ENCODE measurements at regions of chr10 and their contacts with region 1.

Region 1: GRCh38 chr10:98467506-98468346 is 21.0 kb upstream of the HPS1 start:
- DNase-seq: peak; percentile 79
- H3K4me3 ChIP-seq: peak overlapping the region; percentile 31 to 70 (median 44)
- H3K27ac ChIP-seq: peak overlapping the region in 3 of 4 donors; percentile 31 to 46 (median 42)
- H3K4me1 ChIP-seq: peaks cover 0 to 7% (median 3%) of the 10 kb centered on the region in 4 donors
- H3K27me3 ChIP-seq: no peaks in the 10 kb centered on the region
- CTCF ChIP-seq: peak; percentile 81 to 90 (median 85)
- EP300 ChIP-seq: no peak
- POLR2A ChIP-seq: no peak

Region 2: GRCh38 chr10:98664331-98665042 is 196.8 kb after region 1 on chr10:
- in situ Hi-C with region 1: loop called in 2 of 4 experiments (anchors 10 to 25 kb)
- intact Hi-C with region 1: no loop called
- DNase-seq: peak; percentile 10
- H3K4me3 ChIP-seq: no peak overlapping the region
- H3K27ac ChIP-seq: no peak overlapping the region
- H3K4me1 ChIP-seq: no peaks in the 10 kb centered on the region
- H3K27me3 ChIP-seq: no peaks in the 10 kb centered on the region
- CTCF ChIP-seq: peak; percentile 44 to 62 (median 58)
- EP300 ChIP-seq: no peak
- POLR2A ChIP-seq: no peak

Region 3: DNA sequence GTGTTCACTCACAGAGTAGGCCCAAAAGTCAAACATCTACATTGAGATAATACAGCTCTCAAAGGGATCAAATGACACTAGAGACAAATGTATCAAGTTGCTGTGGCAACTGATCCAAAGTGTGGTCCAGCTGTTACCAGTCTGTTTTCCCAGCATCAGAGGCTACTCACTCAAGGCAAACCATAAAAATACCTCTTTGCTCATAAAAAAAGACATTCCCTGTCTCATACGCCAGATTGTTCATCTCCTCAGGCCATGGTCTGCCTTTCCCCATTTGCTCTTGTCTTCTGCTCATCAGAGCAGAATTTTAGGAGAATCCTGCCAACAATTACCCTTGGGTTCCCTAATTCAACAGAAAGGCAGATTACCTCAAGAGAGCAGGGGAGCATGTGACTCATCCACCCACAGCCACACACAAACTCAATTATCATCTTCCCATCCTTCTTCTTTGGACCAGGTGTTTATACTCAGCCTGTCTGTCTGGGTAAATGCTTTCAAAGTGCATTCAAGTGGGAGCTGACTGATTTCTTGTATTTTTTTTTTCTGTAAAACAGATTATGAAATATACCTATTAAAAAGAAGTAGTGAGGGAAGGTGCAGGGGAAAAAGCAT is 205.6 kb after region 1 on chr10:
- in situ Hi-C with region 1: loop called in 3 of 4 experiments (anchors 10 to 25 kb)
- intact Hi-C with region 1: no loop called
- DNase-seq: no peak
- H3K4me3 ChIP-seq: no peak overlapping the region
- H3K27ac ChIP-seq: no peak overlapping the region
- H3K4me1 ChIP-seq: no peaks in the 10 kb centered on the region
- H3K27me3 ChIP-seq: no peaks in the 10 kb centered on the region
- CTCF ChIP-seq: no peak
- EP300 ChIP-seq: no peak
- POLR2A ChIP-seq: no peak

Region 4: DNA sequence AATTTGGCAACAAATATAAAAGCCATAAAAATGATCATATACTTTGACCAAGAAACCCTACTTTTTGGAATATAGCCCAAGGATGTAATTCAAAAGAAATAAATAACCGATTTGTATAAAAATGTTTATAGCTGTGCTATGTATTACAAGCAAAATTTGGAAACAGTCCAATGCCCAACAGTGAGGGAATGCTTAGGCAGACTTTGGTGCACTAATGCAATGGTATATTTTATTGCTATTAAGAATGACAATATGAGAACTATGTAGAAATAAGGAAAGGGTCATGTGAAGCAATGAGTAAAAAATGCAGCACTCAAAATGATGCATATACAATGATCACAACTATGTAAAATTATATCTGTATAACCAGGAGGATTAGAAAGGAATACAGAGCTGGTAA is 252.8 kb after region 1 on chr10:
- in situ Hi-C with region 1: no loop called
- intact Hi-C with region 1: no loop called
- DNase-seq: no peak
- H3K4me3 ChIP-seq: no peak overlapping the region
- H3K27ac ChIP-seq: no peak overlapping the region
- H3K4me1 ChIP-seq: no peaks in the 10 kb centered on the region
- H3K27me3 ChIP-seq: no peaks in the 10 kb centered on the region
- CTCF ChIP-seq: no peak
- EP300 ChIP-seq: no peak
- POLR2A ChIP-seq: no peak

Region 5: DNA sequence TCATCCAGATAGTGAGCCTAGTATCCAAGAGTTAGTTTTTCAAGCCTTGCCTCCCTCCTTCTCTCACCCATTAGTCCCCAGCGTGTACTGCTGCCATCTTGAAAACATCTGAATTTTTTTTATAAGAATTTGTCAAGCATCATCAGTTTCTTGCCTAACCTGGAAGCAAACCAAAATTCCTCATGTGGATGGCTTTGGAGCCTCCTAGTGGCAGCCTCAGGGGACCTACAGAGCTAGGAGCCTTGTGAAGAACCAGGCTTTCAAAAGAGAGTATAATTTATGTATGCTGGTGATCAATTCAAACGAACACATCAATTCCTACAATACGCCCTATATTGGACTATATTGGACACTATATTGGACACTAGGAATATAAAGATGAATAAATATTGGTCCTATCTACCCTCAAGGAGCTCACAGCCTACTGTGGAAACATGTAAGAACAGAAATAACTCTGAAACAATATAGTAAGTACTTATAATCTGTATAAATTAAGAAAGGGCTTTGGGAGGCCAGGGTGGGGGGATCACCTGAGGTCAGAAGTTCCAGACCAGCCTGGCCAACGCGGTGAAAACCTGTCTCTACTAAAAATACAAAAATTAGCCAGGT is 704.5 kb after region 1 on chr10:
- in situ Hi-C with region 1: no loop called
- intact Hi-C with region 1: loop called (anchors 10 kb)
- DNase-seq: peak; percentile 34
- H3K4me3 ChIP-seq: no peak overlapping the region
- H3K27ac ChIP-seq: no peak overlapping the region
- H3K4me1 ChIP-seq: no peaks in the 10 kb centered on the region
- H3K27me3 ChIP-seq: peaks cover 3% of the 10 kb centered on the region
- CTCF ChIP-seq: peak; percentile 34 to 65 (median 48)
- EP300 ChIP-seq: no peak
- POLR2A ChIP-seq: no peak

Region 6: DNA sequence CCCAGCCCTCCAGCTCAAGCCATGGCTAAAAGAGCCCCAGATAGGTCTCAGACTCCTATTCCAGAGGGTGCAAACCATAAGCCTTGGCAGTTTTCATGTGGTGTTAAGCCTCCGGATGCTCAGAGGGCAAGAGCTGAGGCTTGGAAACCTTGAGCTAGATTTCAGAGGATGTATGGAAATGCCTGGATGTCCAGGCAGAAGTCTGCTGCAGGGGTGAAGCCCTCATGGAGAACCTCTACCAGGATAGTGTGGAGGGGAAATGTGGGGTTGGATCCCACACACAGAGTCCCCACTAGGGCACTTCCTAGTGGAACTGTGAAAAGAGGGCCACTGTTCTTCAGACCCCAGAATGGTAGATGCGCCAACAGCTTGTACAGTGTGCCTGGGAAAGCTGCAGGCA is 781.1 kb after region 1 on chr10:
- in situ Hi-C with region 1: loop called (anchors 5 to 10 kb)
- intact Hi-C with region 1: loop called (anchors 5 kb)
- DNase-seq: no peak
- H3K4me3 ChIP-seq: no peak overlapping the region
- H3K27ac ChIP-seq: no peak overlapping the region
- H3K4me1 ChIP-seq: no peaks in the 10 kb centered on the region
- H3K27me3 ChIP-seq: no peaks in the 10 kb centered on the region
- CTCF ChIP-seq: no peak
- EP300 ChIP-seq: no peak
- POLR2A ChIP-seq: no peak